ENCODE measurements at regions of chr2 and their contacts with region 1.

Region 1: GRCh38 chr2:208025037-208025813 is at the start of gene PLEKHM3:
- DNase-seq: peak; percentile 76
- H3K4me3 Mint-ChIP-seq: peak within 1 kb of the TSS; percentile 100
- H3K27ac Mint-ChIP-seq: peak within 1 kb of the TSS; percentile 84
- H3K4me1 Mint-ChIP-seq: peaks cover 19% of the 10 kb centered on the region
- H3K27me3 Mint-ChIP-seq: peaks cover 3% of the 10 kb centered on the region
- total RNA-seq, gene PLEKHM3: 7.1 and 8.4 TPM in 2 replicates

Region 2: DNA sequence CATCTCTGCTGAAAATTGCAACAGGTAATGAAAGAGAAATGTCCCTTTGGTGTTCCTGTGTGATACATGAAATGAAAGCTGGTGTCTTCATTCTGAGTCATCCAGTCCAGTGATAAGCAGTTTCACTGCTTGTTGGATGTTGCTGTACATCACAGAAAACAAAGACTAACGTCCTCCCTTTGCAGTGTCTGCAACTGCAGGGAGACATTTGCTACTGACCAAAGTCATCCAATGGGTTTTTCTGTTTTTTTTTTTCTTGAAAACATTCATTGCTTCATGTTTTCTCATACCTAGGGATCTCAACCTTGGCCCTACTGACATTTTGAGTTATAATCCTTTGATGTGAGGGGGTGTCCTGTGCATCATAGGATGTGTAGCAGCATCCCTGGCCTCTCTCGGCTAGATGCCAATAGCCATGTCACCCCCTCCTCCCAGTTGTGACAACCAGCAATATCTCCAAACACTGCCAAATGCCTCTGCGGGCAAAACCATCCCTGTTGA is 191.9 kb before region 1 on chr2:
- intact Hi-C with region 1: loop called (anchors 5 kb)
- DNase-seq: no peak
- H3K4me3 Mint-ChIP-seq: no peak overlapping the region
- H3K27ac Mint-ChIP-seq: peak overlapping the region; percentile 69
- H3K4me1 Mint-ChIP-seq: peaks cover 31% of the 10 kb centered on the region
- H3K27me3 Mint-ChIP-seq: no peaks in the 10 kb centered on the region

Region 3: GRCh38 chr2:207974216-207974605 is 51.0 kb before region 1 on chr2:
- intact Hi-C with region 1: loop called (anchors 5 kb)
- DNase-seq: no peak
- H3K4me3 Mint-ChIP-seq: no peak overlapping the region
- H3K27ac Mint-ChIP-seq: no peak overlapping the region
- H3K4me1 Mint-ChIP-seq: peaks cover 16% of the 10 kb centered on the region
- H3K27me3 Mint-ChIP-seq: no peaks in the 10 kb centered on the region

Region 4: GRCh38 chr2:208010506-208010905 is 14.7 kb before region 1 on chr2:
- intact Hi-C with region 1: no loop called
- DNase-seq: no peak
- H3K4me3 Mint-ChIP-seq: no peak overlapping the region
- H3K27ac Mint-ChIP-seq: no peak overlapping the region
- H3K4me1 Mint-ChIP-seq: peaks cover 33% of the 10 kb centered on the region
- H3K27me3 Mint-ChIP-seq: no peaks in the 10 kb centered on the region

Region 5: DNA sequence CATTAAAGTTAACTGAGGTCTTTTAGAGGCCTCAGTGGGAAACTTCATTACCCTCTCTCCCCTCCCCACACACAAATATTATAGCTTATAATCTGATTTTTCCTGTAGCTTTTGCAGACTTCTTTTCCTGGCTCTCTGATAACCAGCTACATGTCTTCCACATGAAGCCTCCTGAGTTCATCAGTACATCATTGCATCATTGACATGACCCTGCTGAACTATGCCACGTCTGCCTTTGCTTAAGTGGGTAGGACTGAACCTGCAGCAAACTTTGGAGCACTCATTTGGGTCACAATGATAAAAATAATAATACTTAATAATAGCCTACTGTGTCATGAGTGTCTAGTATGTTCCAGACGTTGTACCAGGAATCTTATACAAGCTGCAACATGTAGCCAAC is 131.2 kb after region 1 on chr2:
- intact Hi-C with region 1: no loop called
- DNase-seq: no peak
- H3K4me3 Mint-ChIP-seq: no peak overlapping the region
- H3K27ac Mint-ChIP-seq: no peak overlapping the region
- H3K4me1 Mint-ChIP-seq: no peaks in the 10 kb centered on the region
- H3K27me3 Mint-ChIP-seq: peaks cover 7% of the 10 kb centered on the region

Measured in activated T-helper 2 cell treated with anti-CD3 and anti-CD28 coated beads, Interferon-gamma antibody, Interleukin-2, Interleukin-4, amounts not matched to agents 10 μg/mL and 5 μg/mL and 100 μg/mL, durations not matched to agents 14 hours and 24 hours and 36 hours (primary cell).